HEK293 (cell line): ENCODE measurements at regions of chr7 and their contacts with region 1.

Region 1: DNA sequence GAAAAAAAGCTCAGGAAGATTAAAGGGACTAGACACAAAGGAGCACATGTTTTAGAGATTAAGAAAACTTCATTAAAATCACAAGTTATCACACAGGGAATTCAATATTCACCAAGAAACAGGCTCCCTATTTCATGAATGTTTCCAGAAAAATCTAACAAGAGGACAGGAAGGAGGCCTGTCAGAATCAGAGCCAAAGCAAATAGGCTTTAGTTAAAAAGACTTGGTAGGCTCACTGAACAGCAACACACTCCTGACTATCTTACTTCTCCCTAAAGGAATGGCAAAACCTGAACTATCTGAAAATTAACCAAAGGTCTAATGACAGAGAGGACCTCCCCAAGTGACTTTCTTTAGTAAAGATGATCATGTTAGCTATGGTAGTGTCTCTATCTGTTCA is 188.3 kb upstream of the MEOX2 start:
- H3K4me3 ChIP-seq: no peak overlapping the region
- H3K27ac ChIP-seq: no peak overlapping the region
- H3K4me1 ChIP-seq: no peaks in the 10 kb centered on the region
- CTCF ChIP-seq: no peak

Region 2: DNA sequence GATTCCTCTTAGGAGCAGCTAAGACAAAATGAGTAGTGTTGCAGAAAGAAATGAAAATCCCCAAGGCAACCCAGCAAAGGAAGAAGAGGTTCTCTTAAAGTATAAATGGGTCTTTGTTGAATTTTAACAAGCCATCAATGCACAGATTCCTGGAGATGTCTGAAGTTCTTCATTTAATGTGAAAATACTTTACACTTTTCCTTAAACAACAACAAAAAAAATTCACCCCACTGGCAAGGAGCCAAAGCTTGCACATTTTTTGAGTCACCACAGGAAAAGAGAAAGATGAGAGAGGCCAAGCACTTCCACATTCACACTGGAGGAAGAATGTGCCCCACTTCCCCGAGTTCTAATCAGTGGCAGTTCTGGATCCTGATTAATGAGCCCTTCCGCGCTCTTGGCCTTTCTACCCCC is 98.1 kb after region 1 on chr7:
- CTCF ChIA-PET with region 1: no interaction called
- POLR2A ChIA-PET with region 1: no interaction called
- H3K4me3 ChIP-seq: no peak overlapping the region
- H3K27ac ChIP-seq: no peak overlapping the region
- H3K4me1 ChIP-seq: no peaks in the 10 kb centered on the region
- CTCF ChIP-seq: no peak

Region 3: DNA sequence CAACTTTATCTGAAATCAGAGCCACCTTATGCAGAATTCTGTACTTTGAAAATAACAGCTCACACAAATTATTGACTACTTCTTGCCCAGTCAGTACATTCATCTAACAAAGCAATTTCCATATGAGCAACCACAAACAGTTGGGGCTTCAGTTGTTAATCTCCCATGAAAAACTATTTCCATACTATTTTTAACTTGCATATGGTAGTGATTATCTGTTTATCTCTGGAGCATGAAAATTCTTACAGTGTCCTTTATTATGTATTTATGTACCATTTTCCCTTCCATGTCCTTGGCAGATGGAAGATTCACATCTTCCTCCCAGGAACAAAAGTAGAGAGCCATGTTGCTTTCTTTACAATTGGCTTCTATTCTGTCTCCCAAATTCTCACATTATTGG is 260.9 kb after region 1 on chr7:
- CTCF ChIA-PET with region 1: no interaction called
- POLR2A ChIA-PET with region 1: interaction called, 10 read pairs
- H3K4me3 ChIP-seq: no peak overlapping the region
- H3K27ac ChIP-seq: no peak overlapping the region
- H3K4me1 ChIP-seq: no peaks in the 10 kb centered on the region
- CTCF ChIP-seq: no peak